HEK293 (cell line): ENCODE measurements at regions of chr7 and their contacts with region 1.

Region 1: DNA sequence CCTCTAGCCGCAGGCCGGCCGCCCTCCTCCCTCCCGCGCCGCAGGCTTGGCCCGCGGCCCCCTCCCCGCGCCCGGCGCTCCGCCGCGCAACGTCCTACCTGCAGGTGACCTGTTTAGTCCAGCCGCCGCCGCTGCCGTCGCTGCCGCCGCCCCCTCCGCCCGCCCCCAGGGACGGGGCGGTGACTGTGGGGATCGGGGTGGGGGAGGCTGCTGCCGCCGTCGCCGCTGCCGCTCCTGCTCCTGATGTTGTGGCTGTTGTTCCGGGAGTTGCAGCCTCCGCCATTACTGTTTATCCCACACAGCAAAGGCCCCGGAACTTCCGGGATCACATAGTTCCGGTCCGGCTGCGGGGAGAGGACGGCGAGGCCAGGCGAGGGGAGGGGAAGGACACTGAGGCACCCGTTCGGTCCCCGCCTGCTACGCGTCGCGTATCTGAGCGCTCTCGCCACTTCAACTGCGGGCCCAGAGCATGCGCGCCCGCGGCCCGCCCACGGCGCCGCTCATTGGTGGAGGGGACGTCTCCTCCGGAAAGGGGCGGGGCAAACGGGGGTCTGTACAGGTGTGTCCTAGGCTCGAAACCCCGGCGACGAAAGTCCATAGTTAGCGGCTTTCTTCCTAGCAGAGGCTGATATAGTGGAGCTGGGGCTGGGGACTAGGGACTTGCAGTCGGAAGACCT is at the start of gene MKRN1:
- H3K4me3 ChIP-seq: peak within 1 kb of the TSS; percentile 97
- H3K27ac ChIP-seq: peak within 1 kb of the TSS; percentile 85
- H3K4me1 ChIP-seq: peaks cover 3% of the 10 kb centered on the region; the same call in 1 of the 2 replicates
- CTCF ChIP-seq: no peak

Region 2: DNA sequence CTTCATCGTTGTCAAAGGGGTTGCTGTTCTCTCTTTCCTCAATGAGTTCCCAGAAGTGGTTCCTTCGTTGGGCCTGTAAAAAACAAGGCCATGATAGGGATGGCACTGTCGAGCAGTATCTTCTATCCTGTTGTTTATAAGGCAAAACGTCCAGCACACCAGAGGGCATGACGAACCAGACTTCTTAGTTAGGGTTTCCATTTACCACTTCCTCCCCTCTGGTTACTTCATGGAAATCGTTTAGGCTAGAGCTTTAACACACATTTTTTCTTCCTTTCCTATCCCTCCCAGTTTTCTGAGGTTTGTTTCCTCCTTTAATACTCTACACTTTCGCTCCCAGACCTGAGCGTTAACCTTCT is 24.6 kb before region 1 on chr7:
- CTCF ChIA-PET with region 1: no interaction called
- POLR2A ChIA-PET with region 1: no interaction called
- H3K4me3 ChIP-seq: no peak overlapping the region
- H3K27ac ChIP-seq: no peak overlapping the region
- H3K4me1 ChIP-seq: no peaks in the 10 kb centered on the region
- CTCF ChIP-seq: no peak

Region 3: DNA sequence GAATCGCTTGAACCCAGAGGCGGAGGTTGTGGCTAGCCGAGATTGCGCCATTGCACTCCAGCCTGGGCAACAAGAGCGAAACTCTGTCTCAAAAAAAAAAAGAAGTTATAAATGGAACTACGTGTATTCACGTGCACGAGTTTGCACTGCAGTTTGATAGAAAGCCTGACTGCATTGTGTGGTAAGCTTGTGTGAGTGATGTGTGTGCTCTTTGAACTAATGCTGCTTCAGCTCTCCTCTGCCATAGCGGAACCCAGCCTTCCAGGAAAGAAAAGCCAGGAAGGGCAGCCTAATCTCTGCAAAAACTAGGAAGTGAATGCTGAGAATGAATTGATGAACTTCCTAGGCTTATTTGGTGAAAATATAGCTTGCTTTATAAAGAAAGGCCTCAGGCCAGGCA is 15.7 kb after region 1 on chr7:
- CTCF ChIA-PET with region 1: interaction called, 40 read pairs
- POLR2A ChIA-PET with region 1: interaction called, 3 read pairs
- H3K4me3 ChIP-seq: no peak overlapping the region
- H3K27ac ChIP-seq: no peak overlapping the region
- H3K4me1 ChIP-seq: no peaks in the 10 kb centered on the region
- CTCF ChIP-seq: no peak

Region 4: DNA sequence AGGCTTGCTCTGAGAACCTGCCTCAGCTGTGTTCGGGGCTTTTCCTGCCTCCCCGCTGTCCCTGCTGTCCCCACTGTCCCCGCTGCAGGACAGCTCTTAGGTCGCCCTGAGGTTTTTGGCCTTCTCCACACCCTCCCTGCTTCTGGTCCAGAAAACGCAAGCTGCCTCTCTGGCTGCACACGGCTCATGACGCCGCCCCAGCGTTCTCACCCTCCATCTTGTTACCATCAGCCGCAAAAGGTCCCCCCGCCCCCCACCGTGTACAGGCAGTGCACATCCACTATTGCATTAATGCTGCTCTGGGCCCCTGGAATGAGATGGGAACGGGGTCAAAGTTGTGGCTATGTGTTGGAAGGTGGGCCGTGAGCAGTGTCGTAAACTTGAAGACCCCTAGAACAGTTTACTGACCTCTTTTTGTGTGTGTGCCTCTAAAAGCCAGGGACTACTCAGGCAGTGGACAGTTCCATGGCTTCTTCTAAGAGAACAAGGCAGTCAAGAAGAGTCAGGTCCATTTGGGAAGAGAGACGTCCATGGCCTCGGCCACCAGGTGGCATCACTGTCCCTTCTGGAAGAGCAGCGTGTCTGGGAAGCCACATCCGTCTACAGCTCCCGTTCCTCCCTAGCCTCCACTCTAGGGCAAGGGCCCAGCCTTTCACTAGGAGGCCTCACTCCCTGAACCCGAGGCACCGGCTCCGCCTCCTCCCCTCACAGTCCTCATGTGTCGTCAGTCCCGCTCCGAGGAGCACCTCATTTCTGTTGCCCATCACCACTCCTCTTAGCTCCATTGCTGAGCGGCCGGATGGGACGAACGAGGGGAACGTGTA is 38.6 kb after region 1 on chr7:
- CTCF ChIA-PET with region 1: interaction called, 13 read pairs
- POLR2A ChIA-PET with region 1: interaction called, 6 read pairs
- H3K4me3 ChIP-seq: no peak overlapping the region
- H3K27ac ChIP-seq: no peak overlapping the region
- H3K4me1 ChIP-seq: no peaks in the 10 kb centered on the region
- CTCF ChIP-seq: peak; percentile 96

Region 5: GRCh38 chr7:140581411-140581810 is 102.2 kb after region 1 on chr7:
- CTCF ChIA-PET with region 1: no interaction called
- POLR2A ChIA-PET with region 1: no interaction called
- H3K4me3 ChIP-seq: no peak overlapping the region
- H3K27ac ChIP-seq: no peak overlapping the region
- H3K4me1 ChIP-seq: no peaks in the 10 kb centered on the region
- CTCF ChIP-seq: no peak

Region 6: DNA sequence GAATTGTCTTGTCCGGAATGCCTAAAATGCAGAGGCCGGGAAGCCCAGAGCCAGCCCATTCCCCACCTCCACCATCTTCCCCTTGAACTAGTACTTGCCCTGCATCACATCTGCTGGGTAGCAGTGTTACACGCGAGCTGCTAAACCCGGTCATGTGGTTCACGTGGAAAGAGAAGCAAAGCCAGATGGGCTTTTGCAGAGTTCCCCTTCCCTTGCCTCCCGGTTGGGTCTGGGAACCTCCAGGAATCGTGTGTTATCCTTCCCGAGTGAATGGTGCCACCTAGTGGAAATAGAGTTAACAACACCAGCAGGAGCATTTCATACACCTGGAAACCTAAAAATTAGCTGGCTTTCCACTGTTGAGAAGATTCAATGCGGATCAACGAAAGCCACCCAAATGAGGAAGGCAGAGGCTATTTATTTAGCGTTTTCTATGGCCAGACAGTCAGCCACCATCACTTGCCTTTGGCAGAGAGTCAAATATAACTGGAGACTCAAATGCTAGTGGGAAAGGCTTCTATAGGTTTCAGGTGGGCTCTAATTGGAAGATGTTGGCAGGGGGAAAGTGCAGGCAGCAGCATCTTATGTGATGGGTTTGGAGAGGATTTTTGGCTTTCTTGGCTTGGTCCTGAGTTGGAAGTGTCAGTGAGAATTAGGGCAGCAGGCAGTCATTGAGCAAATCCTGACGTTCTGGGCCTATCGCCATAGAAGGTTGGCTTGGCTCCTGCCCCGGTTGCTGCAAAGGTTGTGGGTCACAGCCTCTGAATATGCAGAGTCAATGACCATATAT is 174.3 kb after region 1 on chr7:
- CTCF ChIA-PET with region 1: interaction called, 12 read pairs
- POLR2A ChIA-PET with region 1: no interaction called
- H3K4me3 ChIP-seq: no peak overlapping the region
- H3K27ac ChIP-seq: no peak overlapping the region
- H3K4me1 ChIP-seq: no peaks in the 10 kb centered on the region
- CTCF ChIP-seq: peak; percentile 78

Region 7: DNA sequence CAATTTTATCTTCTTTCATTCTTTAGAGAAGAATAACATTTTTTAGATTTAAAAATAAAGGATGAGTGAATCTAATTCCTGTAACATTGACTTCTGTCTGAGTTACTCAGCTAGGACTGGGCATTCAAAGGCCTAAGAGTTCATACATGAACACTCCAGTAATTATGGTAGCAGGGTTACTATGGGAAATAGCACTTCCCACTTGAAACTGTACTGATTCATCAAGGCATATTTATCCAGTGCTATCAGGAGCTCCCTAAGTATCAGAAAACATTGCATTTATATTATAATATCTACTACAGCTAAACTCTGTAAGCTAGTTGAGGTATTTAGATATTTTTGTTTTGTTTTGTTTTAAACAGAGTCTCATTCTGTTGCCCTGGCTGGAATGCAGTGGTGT is 259.1 kb after region 1 on chr7:
- CTCF ChIA-PET with region 1: no interaction called
- POLR2A ChIA-PET with region 1: no interaction called
- H3K4me3 ChIP-seq: no peak overlapping the region
- H3K27ac ChIP-seq: no peak overlapping the region
- H3K4me1 ChIP-seq: no peaks in the 10 kb centered on the region
- CTCF ChIP-seq: no peak